Activated CD4-positive, alpha-beta T cell treated with anti-CD3 and anti-CD28 coated beads, Interleukin-2, amount 10 ng/mL, durations not matched to agents 24 days and 14 days (primary cell): ENCODE measurements at regions of chr3 and their contacts with region 1.

Region 1: DNA sequence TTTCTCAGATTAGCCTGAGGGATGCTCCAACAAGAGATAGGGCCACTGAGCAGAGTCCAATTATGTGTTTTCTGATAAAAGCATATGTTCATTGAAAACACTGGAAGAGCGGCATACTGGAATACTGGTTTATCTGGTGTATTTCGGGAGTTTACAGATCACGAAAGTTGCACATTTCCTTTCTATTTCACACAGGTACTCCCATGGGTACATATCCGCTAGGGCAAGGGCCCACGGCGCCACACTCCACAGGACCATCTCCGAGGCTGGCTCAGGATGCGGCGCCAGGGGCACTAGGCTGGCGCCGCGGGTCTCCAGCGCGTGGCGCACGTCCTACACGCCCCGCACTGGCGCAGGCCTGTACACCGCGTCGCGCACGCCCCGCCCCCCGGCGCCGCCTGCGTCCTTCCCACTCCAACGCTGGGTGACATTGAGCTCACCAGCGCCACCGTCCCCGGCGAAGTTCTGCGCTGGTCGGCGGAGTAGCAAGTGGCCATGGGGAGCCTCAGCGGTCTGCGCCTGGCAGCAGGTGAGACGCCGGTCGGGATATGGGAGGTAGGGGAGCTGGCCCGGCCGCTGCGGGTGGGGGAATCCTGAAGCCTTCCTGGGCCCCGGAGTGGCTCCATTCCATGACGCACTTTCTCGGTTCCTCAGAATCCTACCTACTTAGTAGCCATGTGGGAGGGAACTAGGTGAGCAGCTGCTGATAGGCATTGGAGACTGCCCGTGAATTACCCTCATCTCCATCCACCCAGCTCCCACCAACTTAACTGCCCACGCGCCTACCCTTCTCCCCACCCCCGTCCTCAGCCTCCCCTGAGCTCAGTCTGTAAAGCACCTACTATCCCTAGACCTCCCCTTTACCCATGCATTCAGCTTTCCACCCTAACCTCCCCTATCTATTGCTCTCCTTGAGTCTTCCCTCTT is at the start of gene FAM162A:
- DNase-seq: peak; percentile 98
- H3K4me3 Mint-ChIP-seq: peak within 1 kb of the TSS; percentile 97
- H3K27ac Mint-ChIP-seq: peak within 1 kb of the TSS; percentile 96
- H3K4me1 Mint-ChIP-seq: peaks cover 64% of the 10 kb centered on the region
- H3K27me3 Mint-ChIP-seq: no peaks in the 10 kb centered on the region
- total RNA-seq, gene FAM162A: 77.8 and 84.9 TPM in 2 replicates

Region 2: GRCh38 chr3:121690777-121691405 is 693.1 kb before region 1 on chr3:
- intact Hi-C with region 1: no loop called
- DNase-seq: peak; percentile 60
- H3K4me3 Mint-ChIP-seq: peak overlapping the region; percentile 28
- H3K27ac Mint-ChIP-seq: peak overlapping the region; percentile 31
- H3K4me1 Mint-ChIP-seq: peaks cover 18% of the 10 kb centered on the region
- H3K27me3 Mint-ChIP-seq: no peaks in the 10 kb centered on the region

Region 3: DNA sequence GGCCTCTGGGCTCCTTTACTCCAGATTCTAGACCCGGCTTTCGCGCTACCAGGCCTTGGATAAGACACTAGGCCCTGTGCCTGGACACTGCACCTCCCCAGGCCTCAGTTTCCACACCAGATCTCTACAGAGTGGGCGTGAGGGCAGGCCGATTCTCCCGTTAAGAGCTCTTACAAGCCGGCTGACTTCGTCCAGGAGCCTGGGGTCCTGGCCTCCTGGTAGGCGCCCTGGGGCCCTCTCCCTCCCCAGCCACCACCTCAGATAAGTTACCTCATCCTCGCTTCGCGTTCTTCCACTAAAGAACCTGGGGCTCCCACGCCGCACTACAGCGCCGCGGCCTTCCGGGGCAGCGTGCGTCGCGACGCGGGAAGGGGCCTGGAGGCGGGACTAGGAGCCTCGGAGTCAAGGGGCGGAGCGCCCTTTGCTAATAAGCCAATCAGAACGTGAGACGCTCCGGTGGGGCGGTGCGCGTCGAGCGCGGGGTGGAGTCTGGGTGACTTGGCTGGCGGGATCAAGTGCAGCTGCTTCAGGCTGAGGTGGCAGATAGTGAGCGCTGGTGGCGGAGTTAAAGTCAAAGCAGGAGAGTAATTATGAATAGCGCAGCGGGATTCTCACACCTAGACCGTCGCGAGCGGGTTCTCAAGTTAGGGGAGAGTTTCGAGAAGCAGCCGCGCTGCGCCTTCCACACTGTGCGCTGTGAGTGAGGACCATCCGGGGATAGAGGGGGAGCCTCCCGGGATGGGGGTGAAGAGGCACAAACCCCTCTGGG is 549.2 kb before region 1 on chr3 and contains the starts of genes EAF2 and IQCB1:
- intact Hi-C with region 1: loop called (anchors 2 kb)
- DNase-seq: peak; percentile 99
- H3K4me3 Mint-ChIP-seq: peak within 1 kb of the TSS; percentile 90
- H3K27ac Mint-ChIP-seq: peak within 1 kb of the TSS; percentile 96
- H3K4me1 Mint-ChIP-seq: peaks cover 41% of the 10 kb centered on the region
- H3K27me3 Mint-ChIP-seq: no peaks in the 10 kb centered on the region
- total RNA-seq, gene EAF2: 13.7 and 14.5 TPM in 2 replicates
- total RNA-seq, gene IQCB1: 49.1 and 51.6 TPM in 2 replicates

Region 4: GRCh38 chr3:122365073-122365472 is 19.0 kb before region 1 on chr3:
- intact Hi-C with region 1: loop called (anchors 1 kb)
- DNase-seq: no peak
- H3K4me3 Mint-ChIP-seq: peak overlapping the region; percentile 30
- H3K27ac Mint-ChIP-seq: peak overlapping the region; percentile 95
- H3K4me1 Mint-ChIP-seq: peaks cover 33% of the 10 kb centered on the region
- H3K27me3 Mint-ChIP-seq: no peaks in the 10 kb centered on the region

Region 5: DNA sequence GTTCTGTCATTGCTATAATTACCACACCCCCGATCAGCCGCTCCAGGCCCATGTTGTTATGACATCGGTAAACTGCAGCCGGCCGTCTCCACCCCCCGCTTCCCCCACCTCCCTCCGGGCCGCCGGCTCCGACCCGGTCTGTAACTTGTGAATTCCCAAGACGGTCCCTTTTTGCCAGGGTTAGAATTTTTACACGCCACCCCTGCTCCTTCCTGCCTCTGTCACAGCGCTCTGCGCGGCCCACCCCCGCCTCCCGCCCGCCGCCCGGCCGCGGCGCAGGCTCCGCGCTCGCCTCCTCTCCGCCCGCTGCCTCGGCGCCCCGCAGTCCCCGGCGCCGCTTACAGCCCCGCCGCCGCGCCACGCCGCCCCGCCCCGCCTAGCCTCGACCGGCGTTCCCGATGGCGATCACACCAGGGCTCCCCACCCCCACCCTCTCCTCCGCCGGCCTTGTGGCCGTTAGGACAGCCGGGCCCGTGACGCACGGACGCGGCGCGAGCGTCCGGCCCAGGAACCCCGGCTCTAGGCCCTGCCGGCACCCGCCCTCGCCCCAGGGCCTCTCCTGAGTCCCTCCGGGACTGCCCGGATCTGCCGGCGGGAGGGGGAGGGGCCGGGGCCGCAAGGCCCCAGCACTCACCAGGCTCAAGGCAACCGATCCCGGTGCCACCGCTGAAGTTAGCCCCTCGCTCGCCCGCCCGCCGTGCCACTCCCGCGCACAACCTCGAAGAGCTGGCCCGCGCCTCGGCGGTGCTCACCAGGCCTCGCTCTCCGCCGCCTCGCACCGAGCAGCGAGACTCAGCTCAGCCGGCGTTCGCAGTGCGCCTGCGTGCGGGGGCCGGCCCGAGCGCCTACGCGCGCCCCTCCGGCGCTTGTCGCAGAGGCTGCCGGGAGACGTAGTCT is 130.3 kb after region 1 on chr3 and contains the start of gene KPNA1:
- intact Hi-C with region 1: loop called (anchors 1 kb)
- DNase-seq: peak; percentile 97
- H3K4me3 Mint-ChIP-seq: peak within 1 kb of the TSS; percentile 84
- H3K27ac Mint-ChIP-seq: peak within 1 kb of the TSS; percentile 91
- H3K4me1 Mint-ChIP-seq: peaks cover 26% of the 10 kb centered on the region
- H3K27me3 Mint-ChIP-seq: no peaks in the 10 kb centered on the region
- total RNA-seq, gene KPNA1: 78.4 and 79.4 TPM in 2 replicates

Region 6: GRCh38 chr3:122679085-122679881 is 295.2 kb after region 1 on chr3:
- intact Hi-C with region 1: loop called (anchors 2 kb)
- DNase-seq: peak; percentile 94
- H3K4me3 Mint-ChIP-seq: peak overlapping the region; percentile 99
- H3K27ac Mint-ChIP-seq: peak overlapping the region; percentile 98
- H3K4me1 Mint-ChIP-seq: peaks cover 56% of the 10 kb centered on the region
- H3K27me3 Mint-ChIP-seq: no peaks in the 10 kb centered on the region